ENCODE measurements at regions of chr6 and their contacts with region 1.

Region 1: GRCh38 chr6:31139599-31139998 is 733 bp upstream of the PSORS1C2 start:
- DNase-seq: no peak
- H3K4me3 ChIP-seq: no peak overlapping the region
- H3K27ac ChIP-seq: no peak overlapping the region
- H3K4me1 ChIP-seq: no peaks in the 10 kb centered on the region
- H3K27me3 ChIP-seq: no peaks in the 10 kb centered on the region
- CTCF ChIP-seq: no peak

Region 2: DNA sequence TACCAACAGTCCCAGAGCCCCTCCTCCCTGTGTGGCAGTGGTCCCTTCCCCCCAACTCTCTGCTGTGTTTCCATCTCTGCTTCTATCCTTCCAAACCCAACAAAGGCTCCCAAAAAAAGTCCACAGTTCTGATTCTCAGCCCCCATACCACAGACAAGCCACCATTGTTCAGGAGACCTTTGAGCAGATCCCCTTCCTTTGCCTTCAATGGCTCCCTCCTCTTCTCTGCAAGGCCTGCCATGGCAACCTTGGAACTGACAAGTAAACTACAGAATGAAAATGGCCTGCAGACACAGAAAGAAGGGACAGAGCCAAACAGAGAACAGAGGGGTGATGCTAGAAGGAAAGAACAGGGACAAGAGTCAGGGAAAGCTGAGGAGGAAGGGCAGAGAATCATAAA is 1531.5 kb before region 1 on chr6:
- CTCF ChIA-PET with region 1: no interaction called
- POLR2A ChIA-PET with region 1: no interaction called
- intact Hi-C with region 1: no loop called
- DNase-seq: no peak
- H3K4me3 ChIP-seq: no peak overlapping the region
- H3K27ac ChIP-seq: no peak overlapping the region
- H3K4me1 ChIP-seq: no peaks in the 10 kb centered on the region
- H3K27me3 ChIP-seq: no peaks in the 10 kb centered on the region
- CTCF ChIP-seq: no peak

Region 3: GRCh38 chr6:30981942-30982772 is 157.4 kb before region 1 on chr6:
- CTCF ChIA-PET with region 1: no interaction called
- POLR2A ChIA-PET with region 1: no interaction called
- intact Hi-C with region 1: no loop called
- DNase-seq: peak; percentile 79
- H3K4me3 ChIP-seq: peak overlapping the region; percentile 28
- H3K27ac ChIP-seq: peak overlapping the region; percentile 28
- H3K4me1 ChIP-seq: peaks cover 11% of the 10 kb centered on the region
- H3K27me3 ChIP-seq: no peaks in the 10 kb centered on the region
- CTCF ChIP-seq: peak; percentile 29; the same call in 1 of the 2 replicates

Region 4: GRCh38 chr6:31350196-31351032 is 210.8 kb after region 1 on chr6:
- CTCF ChIA-PET with region 1: no interaction called
- POLR2A ChIA-PET with region 1: no interaction called
- intact Hi-C with region 1: no loop called
- DNase-seq: no peak
- H3K4me3 ChIP-seq: no peak overlapping the region
- H3K27ac ChIP-seq: no peak overlapping the region
- H3K4me1 ChIP-seq: no peaks in the 10 kb centered on the region
- H3K27me3 ChIP-seq: peaks cover 25% of the 10 kb centered on the region
- CTCF ChIP-seq: no peak

Region 5: GRCh38 chr6:31366693-31367470 is 227.3 kb after region 1 on chr6:
- CTCF ChIA-PET with region 1: interaction called, 9 read pairs
- POLR2A ChIA-PET with region 1: no interaction called
- intact Hi-C with region 1: loop called (anchors 2 kb)
- DNase-seq: peak; percentile 89
- H3K4me3 ChIP-seq: no peak overlapping the region
- H3K27ac ChIP-seq: no peak overlapping the region
- H3K4me1 ChIP-seq: peaks cover 3% of the 10 kb centered on the region
- H3K27me3 ChIP-seq: peaks cover 79% of the 10 kb centered on the region
- CTCF ChIP-seq: peak; percentile 97

Region 6: GRCh38 chr6:31639449-31639861 is 499.9 kb after region 1 on chr6:
- CTCF ChIA-PET with region 1: no interaction called
- POLR2A ChIA-PET with region 1: no interaction called
- intact Hi-C with region 1: no loop called
- DNase-seq: no peak
- H3K4me3 ChIP-seq: no peak overlapping the region
- H3K27ac ChIP-seq: no peak overlapping the region
- H3K4me1 ChIP-seq: no peaks in the 10 kb centered on the region
- H3K27me3 ChIP-seq: no peaks in the 10 kb centered on the region
- CTCF ChIP-seq: no peak

Measured in A673 (cell line).